ENCODE measurements at regions of chr15 and their contacts with region 1.

Region 1: GRCh38 chr15:61169904-61170695 is 59.0 kb downstream of the RORA start:
- DNase-seq: no peak
- ATAC-seq: no peak
- H3K4me3 ChIP-seq: no peak overlapping the region
- H3K27ac ChIP-seq: no peak overlapping the region
- H3K4me1 ChIP-seq: no peaks in the 10 kb centered on the region
- H3K27me3 ChIP-seq: no peaks in the 10 kb centered on the region
- CTCF ChIP-seq: no peak

Region 2: GRCh38 chr15:61184431-61184830 is 14.3 kb after region 1 on chr15:
- CTCF ChIA-PET with region 1: interaction called, 10 read pairs
- POLR2A ChIA-PET with region 1: no interaction called
- intact Hi-C with region 1: no loop called
- DNase-seq: no peak
- ATAC-seq: no peak
- H3K4me3 ChIP-seq: no peak overlapping the region
- H3K27ac ChIP-seq: no peak overlapping the region
- H3K4me1 ChIP-seq: no peaks in the 10 kb centered on the region
- H3K27me3 ChIP-seq: peaks cover 8% of the 10 kb centered on the region; the same call in 1 of the 2 replicates
- CTCF ChIP-seq: peak; percentile 25; the same call in 1 of the 2 replicates

Region 3: DNA sequence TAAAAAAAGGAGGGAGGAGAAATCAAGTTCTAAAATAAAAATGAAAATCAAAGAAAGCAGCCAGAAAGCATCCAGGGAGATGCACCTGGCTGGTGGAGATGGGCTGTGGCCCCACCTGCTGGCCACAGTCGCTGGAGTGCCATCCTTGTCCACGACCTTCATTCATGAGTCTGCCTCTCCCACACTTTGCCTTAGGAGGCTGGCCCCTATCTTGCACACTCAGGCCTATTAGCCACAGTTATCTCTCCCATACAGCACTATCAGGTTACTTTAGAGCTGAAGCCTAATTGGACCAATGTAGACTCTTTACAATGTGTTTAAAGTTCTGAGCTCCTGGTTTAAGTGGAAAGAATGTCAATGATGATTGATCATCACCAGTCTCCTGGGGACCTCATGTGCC is 451.0 kb after region 1 on chr15:
- CTCF ChIA-PET with region 1: no interaction called
- POLR2A ChIA-PET with region 1: no interaction called
- intact Hi-C with region 1: loop called (anchors 10 kb)
- DNase-seq: peak; percentile 43
- ATAC-seq: no peak
- H3K4me3 ChIP-seq: no peak overlapping the region
- H3K27ac ChIP-seq: no peak overlapping the region
- H3K4me1 ChIP-seq: no peaks in the 10 kb centered on the region
- H3K27me3 ChIP-seq: peaks cover 20% of the 10 kb centered on the region
- CTCF ChIP-seq: peak; percentile 64

Region 4: GRCh38 chr15:61834076-61834697 is 664.1 kb after region 1 on chr15:
- CTCF ChIA-PET with region 1: interaction called, 23 read pairs
- POLR2A ChIA-PET with region 1: no interaction called
- intact Hi-C with region 1: loop called (anchors 1 kb)
- DNase-seq: peak; percentile 83
- ATAC-seq: peak; percentile 79
- H3K4me3 ChIP-seq: no peak overlapping the region
- H3K27ac ChIP-seq: no peak overlapping the region
- H3K4me1 ChIP-seq: no peaks in the 10 kb centered on the region
- H3K27me3 ChIP-seq: no peaks in the 10 kb centered on the region
- CTCF ChIP-seq: peak; percentile 88